B cell (primary cell): ENCODE measurements at regions of chr3 and their contacts with region 1.

Region 1: DNA sequence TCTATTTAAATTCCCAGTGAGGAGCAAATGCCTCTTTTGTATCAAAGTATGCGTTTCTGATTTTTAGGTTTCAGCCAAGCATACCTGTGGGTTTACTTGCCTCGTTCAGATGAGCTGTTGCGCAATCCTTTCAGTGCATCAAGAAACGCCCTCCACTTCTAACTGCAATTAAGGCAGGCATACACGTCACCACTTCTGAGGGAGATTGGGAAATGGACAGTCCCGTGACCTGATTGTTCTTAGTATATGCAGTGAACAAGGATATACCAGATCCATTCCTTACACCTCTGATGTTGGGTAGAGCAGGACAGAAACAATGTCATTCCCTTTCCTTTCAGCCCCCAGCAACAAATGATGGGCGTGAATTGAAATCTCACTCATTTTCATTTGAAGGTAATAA is 219.0 kb downstream of the ITPR1 start:
- DNase-seq: no peak
- ATAC-seq: no peak
- H3K4me3 ChIP-seq: no peak overlapping the region
- H3K4me3 Mint-ChIP-seq: no peak overlapping the region
- H3K27ac ChIP-seq: no peak overlapping the region
- H3K27ac Mint-ChIP-seq: no peak overlapping the region
- H3K4me1 ChIP-seq: no peaks in the 10 kb centered on the region
- H3K4me1 Mint-ChIP-seq: no peaks in the 10 kb centered on the region
- H3K27me3 ChIP-seq: no peaks in the 10 kb centered on the region
- H3K27me3 Mint-ChIP-seq: no peaks in the 10 kb centered on the region
- CTCF ChIP-seq: no peak

Region 2: DNA sequence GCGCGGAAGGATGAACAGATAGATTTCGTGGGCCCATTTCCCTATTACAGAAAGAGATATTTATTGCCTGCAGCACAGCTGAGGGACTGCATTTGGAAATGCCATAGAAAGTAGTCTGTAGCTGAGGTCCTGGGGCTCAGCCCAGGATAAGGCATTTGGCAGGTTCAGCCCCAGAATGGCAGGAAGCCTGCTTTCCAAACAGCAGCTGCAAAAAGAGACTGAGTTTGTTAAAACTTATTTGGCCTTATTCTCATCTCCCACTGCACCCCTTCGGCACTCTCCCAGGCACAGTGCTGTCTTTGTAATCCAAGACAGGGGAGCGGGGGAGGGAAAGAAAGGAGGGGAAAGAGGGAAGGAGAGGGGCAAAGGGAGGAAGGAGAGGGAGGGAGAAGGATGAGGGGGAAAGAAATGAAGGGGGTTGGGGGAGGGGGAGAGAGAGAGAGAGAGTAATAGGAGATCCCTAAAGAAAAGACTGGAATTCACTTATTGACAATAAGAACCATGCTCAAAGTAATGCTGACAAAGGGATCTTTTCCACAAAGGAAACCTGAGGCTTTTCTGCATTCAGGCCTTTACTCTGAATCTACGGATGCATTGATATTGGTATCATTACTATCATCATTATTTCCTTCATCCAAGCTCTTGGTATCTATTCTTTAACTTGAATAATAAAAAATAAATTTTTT is 1006.9 kb before region 1 on chr3:
- CTCF ChIA-PET with region 1: no interaction called
- POLR2A ChIA-PET with region 1: no interaction called
- intact Hi-C with region 1: no loop called
- DNase-seq: no peak
- ATAC-seq: no peak
- H3K4me3 ChIP-seq: no peak overlapping the region
- H3K4me3 Mint-ChIP-seq: no peak overlapping the region
- H3K27ac ChIP-seq: no peak overlapping the region
- H3K27ac Mint-ChIP-seq: no peak overlapping the region
- H3K4me1 ChIP-seq: no peaks in the 10 kb centered on the region
- H3K4me1 Mint-ChIP-seq: no peaks in the 10 kb centered on the region
- H3K27me3 ChIP-seq: no peaks in the 10 kb centered on the region
- H3K27me3 Mint-ChIP-seq: no peaks in the 10 kb centered on the region
- CTCF ChIP-seq: no peak

Region 3: DNA sequence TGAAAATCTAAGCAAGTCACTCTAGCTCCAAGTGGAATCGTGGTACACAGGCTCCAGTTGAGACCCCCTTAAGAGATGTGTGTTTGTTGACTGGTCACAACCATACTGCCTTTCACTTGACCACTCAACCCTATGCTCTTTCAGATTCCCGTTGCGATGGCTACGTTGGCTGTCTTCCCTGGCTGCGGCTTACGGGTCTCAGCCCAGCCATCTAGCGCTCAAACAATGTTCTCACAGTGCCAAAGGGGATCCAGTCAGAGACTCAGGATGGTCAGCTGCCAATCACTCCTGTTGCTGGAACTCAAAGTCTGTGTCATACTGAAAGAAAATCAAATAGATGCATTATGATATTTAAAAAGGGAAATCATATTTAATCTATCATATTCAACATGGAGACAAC is 18.6 kb after region 1 on chr3:
- CTCF ChIA-PET with region 1: interaction called, 17 read pairs
- POLR2A ChIA-PET with region 1: no interaction called
- intact Hi-C with region 1: no loop called
- DNase-seq: no peak
- ATAC-seq: no peak
- H3K4me3 ChIP-seq: no peak overlapping the region
- H3K4me3 Mint-ChIP-seq: no peak overlapping the region
- H3K27ac ChIP-seq: no peak overlapping the region
- H3K27ac Mint-ChIP-seq: no peak overlapping the region
- H3K4me1 ChIP-seq: no peaks in the 10 kb centered on the region
- H3K4me1 Mint-ChIP-seq: no peaks in the 10 kb centered on the region
- H3K27me3 ChIP-seq: no peaks in the 10 kb centered on the region
- H3K27me3 Mint-ChIP-seq: no peaks in the 10 kb centered on the region
- CTCF ChIP-seq: no peak

Region 4: DNA sequence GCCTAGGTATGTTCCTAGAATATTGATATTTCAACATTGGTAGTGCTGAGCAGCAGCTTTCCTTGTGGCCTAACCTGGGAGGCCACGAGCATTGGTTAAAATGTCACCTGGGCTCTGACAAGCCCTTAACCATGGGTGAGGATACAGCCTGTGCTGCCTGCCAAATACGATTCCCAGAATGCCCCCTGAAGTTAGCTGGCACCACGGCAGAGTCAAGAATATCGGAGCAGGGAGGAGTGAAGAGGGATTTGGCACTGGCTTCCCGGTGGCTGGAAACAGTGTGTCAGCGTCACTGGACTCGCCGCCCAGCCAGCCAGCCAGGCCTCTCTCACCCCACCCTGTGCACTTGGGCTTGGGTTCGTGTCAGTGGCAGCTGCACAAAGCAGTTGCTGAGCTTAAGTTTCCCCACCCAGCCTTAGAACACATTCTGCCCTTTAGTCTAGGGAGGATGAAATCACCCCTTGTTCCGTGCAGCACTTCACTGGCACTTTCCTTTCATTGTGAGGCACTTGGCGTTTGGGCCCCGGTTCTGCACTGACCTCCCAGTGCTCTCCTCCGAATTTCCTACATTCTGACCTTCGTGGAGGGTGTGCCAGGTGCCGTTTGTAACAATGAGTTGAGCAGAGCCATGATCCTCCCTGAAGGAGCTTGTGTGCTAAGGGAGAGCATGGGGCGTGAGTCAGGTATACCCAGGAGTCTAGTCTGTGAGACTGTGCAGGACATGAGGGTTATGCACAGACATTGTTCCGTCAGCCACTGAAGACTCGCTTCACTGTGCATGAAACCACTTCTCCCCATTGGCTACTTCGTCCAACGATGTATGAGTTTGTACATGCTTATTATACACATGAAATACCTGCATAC is 114.3 kb after region 1 on chr3:
- CTCF ChIA-PET with region 1: interaction called, 12 read pairs
- POLR2A ChIA-PET with region 1: no interaction called
- intact Hi-C with region 1: loop called (anchors 10 kb)
- DNase-seq: no peak
- ATAC-seq: no peak
- H3K4me3 ChIP-seq: no peak overlapping the region
- H3K4me3 Mint-ChIP-seq: peak overlapping the region; percentile 47
- H3K27ac ChIP-seq: no peak overlapping the region
- H3K27ac Mint-ChIP-seq: no peak overlapping the region
- H3K4me1 ChIP-seq: peaks cover 51 to 59% of the 10 kb centered on the region in 2 donors
- H3K4me1 Mint-ChIP-seq: peaks cover 64% of the 10 kb centered on the region
- H3K27me3 ChIP-seq: no peaks in the 10 kb centered on the region
- H3K27me3 Mint-ChIP-seq: no peaks in the 10 kb centered on the region
- CTCF ChIP-seq: no peak

Region 5: DNA sequence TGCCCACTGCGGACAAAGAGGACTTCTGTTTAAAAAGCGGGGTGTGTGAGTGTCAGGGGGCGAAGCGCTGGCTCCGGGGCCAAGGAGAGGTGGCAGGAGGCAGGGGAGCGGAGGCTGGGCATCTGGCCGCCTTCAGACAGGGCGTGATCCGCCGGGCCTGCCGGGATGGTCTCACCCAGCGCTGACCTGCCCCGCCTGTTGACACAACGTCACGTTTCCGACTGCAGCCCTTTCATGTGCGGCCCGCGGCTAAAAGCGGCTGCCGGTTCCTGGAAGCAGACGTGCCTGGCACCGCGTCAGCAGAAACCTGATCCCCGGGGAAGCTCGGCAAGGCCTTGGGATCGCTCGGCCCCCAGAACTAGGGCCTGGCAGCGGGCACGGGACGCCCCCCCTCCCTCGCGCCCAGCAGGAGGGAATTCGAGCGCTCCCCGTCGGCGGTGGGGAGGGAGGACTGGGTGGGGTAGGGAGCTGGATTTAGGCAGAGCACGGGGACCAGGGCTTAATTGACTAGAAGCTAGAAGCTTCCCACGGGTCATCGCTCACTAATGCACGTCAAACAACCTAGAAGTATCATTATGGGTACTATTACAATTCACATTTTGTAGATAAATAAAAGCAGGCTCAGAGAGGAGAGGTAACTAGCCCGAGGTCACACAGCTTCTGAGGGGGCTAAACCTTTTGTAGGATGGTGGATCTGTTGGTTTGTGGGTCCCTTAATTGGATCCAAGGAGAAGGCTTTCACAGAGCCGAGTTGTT is 274.8 kb after region 1 on chr3:
- CTCF ChIA-PET with region 1: interaction called, 22 read pairs
- POLR2A ChIA-PET with region 1: no interaction called
- intact Hi-C with region 1: no loop called
- DNase-seq: peak; percentile 77
- ATAC-seq: peak; percentile 42
- H3K4me3 ChIP-seq: peak overlapping the region; percentile 0 to 71 (median 68)
- H3K4me3 Mint-ChIP-seq: peak overlapping the region; percentile 90
- H3K27ac ChIP-seq: peak overlapping the region; percentile 86 to 92
- H3K27ac Mint-ChIP-seq: peak overlapping the region; percentile 94
- H3K4me1 ChIP-seq: peaks cover 57 to 65% of the 10 kb centered on the region in 2 donors
- H3K4me1 Mint-ChIP-seq: peaks cover 63% of the 10 kb centered on the region
- H3K27me3 ChIP-seq: no peaks in the 10 kb centered on the region
- H3K27me3 Mint-ChIP-seq: no peaks in the 10 kb centered on the region
- CTCF ChIP-seq: no peak

Region 6: DNA sequence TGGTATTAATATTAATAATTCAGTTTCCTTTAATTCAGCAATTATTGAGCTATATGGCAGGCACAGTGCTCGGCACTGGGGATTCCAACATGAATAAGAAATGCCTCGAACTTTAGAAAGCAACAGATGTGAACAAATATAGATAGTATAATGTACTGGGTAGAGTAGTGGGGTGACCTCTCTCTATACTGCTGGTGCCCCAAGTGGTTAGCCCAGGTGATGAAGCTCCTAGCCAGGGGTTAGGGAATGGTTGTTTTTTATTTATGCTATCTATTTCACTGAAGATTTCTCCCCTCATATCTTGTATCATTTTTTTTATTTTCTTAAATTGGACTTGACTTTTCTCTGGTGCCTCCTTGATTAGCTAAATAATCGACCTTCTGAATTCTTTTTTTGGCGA is 329.2 kb after region 1 on chr3:
- CTCF ChIA-PET with region 1: interaction called, 15 read pairs
- POLR2A ChIA-PET with region 1: no interaction called
- intact Hi-C with region 1: no loop called
- DNase-seq: no peak
- ATAC-seq: no peak
- H3K4me3 ChIP-seq: no peak overlapping the region
- H3K4me3 Mint-ChIP-seq: no peak overlapping the region
- H3K27ac ChIP-seq: no peak overlapping the region
- H3K27ac Mint-ChIP-seq: no peak overlapping the region
- H3K4me1 ChIP-seq: peaks cover 18 to 25% of the 10 kb centered on the region in 2 donors
- H3K4me1 Mint-ChIP-seq: peaks cover 26% of the 10 kb centered on the region
- H3K27me3 ChIP-seq: no peaks in the 10 kb centered on the region
- H3K27me3 Mint-ChIP-seq: no peaks in the 10 kb centered on the region
- CTCF ChIP-seq: no peak

Region 7: DNA sequence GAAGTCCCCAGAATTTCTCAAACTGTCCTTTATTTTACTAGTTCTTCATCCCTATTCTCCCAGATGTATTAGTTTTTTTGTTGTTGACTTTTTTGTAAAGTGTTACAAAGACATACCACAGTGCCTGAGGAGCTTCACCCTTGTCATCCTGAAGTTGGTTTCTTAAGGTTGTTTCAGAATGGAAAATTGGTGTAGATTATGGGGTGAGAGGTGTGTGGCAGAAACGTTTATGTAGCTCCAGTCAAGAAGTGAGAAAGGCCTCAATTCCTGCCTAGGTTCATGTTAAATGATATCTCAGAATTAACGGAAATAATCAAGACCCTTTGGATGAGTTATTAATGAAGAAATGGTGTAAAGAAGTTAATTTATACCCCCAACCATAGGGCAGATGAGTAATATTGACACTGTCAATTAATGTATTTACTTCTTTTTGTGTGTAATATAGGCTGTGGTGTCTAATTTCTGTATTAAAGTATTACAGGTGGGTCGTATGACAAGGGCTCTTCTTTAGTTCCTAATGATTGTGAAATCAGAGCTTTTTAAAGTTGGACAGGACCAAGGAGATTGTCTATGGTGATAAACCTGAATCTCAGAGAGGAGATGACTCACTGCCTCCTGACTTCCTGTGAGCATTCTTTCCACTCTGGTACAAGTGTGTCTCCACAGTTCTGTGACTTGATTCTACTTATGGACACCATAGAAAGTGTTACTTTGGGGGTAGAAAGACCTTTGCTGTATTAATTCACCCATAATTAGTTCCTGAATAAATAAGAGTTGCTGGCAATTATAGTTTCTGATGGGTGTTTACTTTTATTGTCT is 482.4 kb after region 1 on chr3:
- CTCF ChIA-PET with region 1: no interaction called
- POLR2A ChIA-PET with region 1: no interaction called
- intact Hi-C with region 1: loop called (anchors 5 kb)
- DNase-seq: peak; percentile 48
- ATAC-seq: peak; percentile 56
- H3K4me3 ChIP-seq: no peak overlapping the region
- H3K4me3 Mint-ChIP-seq: peak overlapping the region; percentile 66
- H3K27ac ChIP-seq: peak overlapping the region; percentile 81 to 97
- H3K27ac Mint-ChIP-seq: peak overlapping the region; percentile 82
- H3K4me1 ChIP-seq: peaks cover 86 to 91% of the 10 kb centered on the region in 2 donors
- H3K4me1 Mint-ChIP-seq: peaks cover 87% of the 10 kb centered on the region
- H3K27me3 ChIP-seq: no peaks in the 10 kb centered on the region
- H3K27me3 Mint-ChIP-seq: no peaks in the 10 kb centered on the region
- CTCF ChIP-seq: no peak